ENCODE measurements at regions of chr1 and their contacts with region 1.

Region 1: GRCh38 chr1:89670163-89670562 is 37.2 kb downstream of the LRRC8C start:
- DNase-seq: peak; percentile 65 to 79 (median 70)
- H3K4me3 ChIP-seq: no peak overlapping the region
- H3K4me3 Mint-ChIP-seq: peak overlapping the region; percentile 4 to 82 (median 72)
- H3K27ac ChIP-seq: no peak overlapping the region
- H3K27ac Mint-ChIP-seq: peak overlapping the region; percentile 19 to 93 (median 84)
- H3K4me1 ChIP-seq: peaks cover 96% of the 10 kb centered on the region
- H3K4me1 Mint-ChIP-seq: peaks cover 79 to 97% (median 87%) of the 10 kb centered on the region in 4 donors
- H3K27me3 ChIP-seq: no peaks in the 10 kb centered on the region
- H3K27me3 Mint-ChIP-seq: no peaks in the 10 kb centered on the region

Region 2: GRCh38 chr1:89643577-89643976 is 26.6 kb before region 1 on chr1:
- CTCF ChIA-PET with region 1: no interaction called
- POLR2A ChIA-PET with region 1: no interaction called
- intact Hi-C with region 1: no loop called
- DNase-seq: no peak
- H3K4me3 ChIP-seq: no peak overlapping the region
- H3K4me3 Mint-ChIP-seq: peak overlapping the region in 3 of 8 donors; percentile 14 to 61 (median 54)
- H3K27ac ChIP-seq: peak overlapping the region; percentile 3
- H3K27ac Mint-ChIP-seq: peak overlapping the region in 4 of 7 donors; percentile 6 to 59 (median 48)
- H3K4me1 ChIP-seq: peaks cover 64% of the 10 kb centered on the region
- H3K4me1 Mint-ChIP-seq: peaks cover 35 to 70% (median 58%) of the 10 kb centered on the region in 4 donors
- H3K27me3 ChIP-seq: no peaks in the 10 kb centered on the region
- H3K27me3 Mint-ChIP-seq: no peaks in the 10 kb centered on the region

Region 3: GRCh38 chr1:89711140-89711778 is 41.1 kb after region 1 on chr1:
- CTCF ChIA-PET with region 1: no interaction called
- POLR2A ChIA-PET with region 1: no interaction called
- intact Hi-C with region 1: loop called (anchors 5 kb)
- DNase-seq: no peak
- H3K4me3 ChIP-seq: no peak overlapping the region
- H3K4me3 Mint-ChIP-seq: no peak overlapping the region
- H3K27ac ChIP-seq: no peak overlapping the region
- H3K27ac Mint-ChIP-seq: peak overlapping the region in 4 of 7 donors; percentile 17 to 81 (median 38)
- H3K4me1 ChIP-seq: peaks cover 8% of the 10 kb centered on the region
- H3K4me1 Mint-ChIP-seq: peaks cover 28 to 65% (median 47%) of the 10 kb centered on the region in 4 donors
- H3K27me3 ChIP-seq: no peaks in the 10 kb centered on the region
- H3K27me3 Mint-ChIP-seq: no peaks in the 10 kb centered on the region

Region 4: GRCh38 chr1:89942825-89943688 is 272.9 kb after region 1 on chr1:
- CTCF ChIA-PET with region 1: no interaction called
- POLR2A ChIA-PET with region 1: no interaction called
- intact Hi-C with region 1: no loop called
- DNase-seq: no peak
- H3K4me3 ChIP-seq: no peak overlapping the region
- H3K4me3 Mint-ChIP-seq: no peak overlapping the region
- H3K27ac ChIP-seq: no peak overlapping the region
- H3K27ac Mint-ChIP-seq: peak overlapping the region in 2 of 7 donors; percentile 10 to 14
- H3K4me1 ChIP-seq: no peaks in the 10 kb centered on the region
- H3K4me1 Mint-ChIP-seq: no peaks in the 10 kb centered on the region
- H3K27me3 ChIP-seq: no peaks in the 10 kb centered on the region
- H3K27me3 Mint-ChIP-seq: no peaks in the 10 kb centered on the region